Cardiac septum (tissue), 1 donor: ENCODE measurements at regions of chr19 and their contacts with region 1.

Region 1: DNA sequence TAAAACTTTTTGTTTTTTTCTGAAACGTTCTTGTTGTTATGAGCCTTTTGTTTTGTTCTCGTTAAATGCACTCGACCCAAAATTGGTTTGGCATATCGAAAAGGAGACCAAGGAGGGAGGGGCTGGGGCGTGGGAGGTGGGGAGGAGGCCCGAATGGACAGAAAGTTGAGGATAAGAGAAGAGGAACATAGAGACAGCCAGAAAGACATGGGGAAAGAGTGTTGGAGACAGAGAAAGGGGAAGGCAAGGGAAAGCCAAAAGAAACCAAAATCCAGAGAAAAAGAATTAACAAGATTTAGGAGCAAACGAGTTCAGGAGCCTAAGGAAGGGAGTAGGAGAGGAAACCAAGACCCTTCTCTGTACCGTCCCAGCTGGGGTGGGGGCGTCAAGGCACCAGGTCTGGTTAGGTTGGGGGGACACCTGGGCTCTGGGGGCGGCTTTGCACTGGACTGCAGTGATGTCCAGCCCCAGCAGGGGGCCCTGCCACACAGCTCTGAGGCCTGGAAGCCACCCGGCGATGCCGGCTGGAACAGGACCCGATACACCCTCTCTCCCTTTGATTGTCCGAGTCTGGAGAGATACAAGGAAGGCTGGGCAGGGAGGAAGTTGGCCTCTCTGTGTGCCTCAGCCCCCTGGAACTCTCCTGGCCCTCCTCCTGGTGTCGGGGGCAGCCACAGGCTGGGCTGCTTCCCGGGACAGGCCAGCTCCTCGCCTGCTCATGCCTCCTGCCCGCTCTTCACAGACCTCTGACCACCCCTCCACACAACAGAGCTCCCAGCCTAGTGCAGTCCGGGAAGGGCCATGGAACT is 11.6 kb upstream of the ASF1B start:
- DNase-seq: peak; percentile 89

Region 2: GRCh38 chr19:14198384-14199376 is 50.7 kb after region 1 on chr19:
- intact Hi-C with region 1: loop called (anchors 5 kb)
- DNase-seq: no peak

Region 3: GRCh38 chr19:14347999-14348889 is 200.2 kb after region 1 on chr19:
- intact Hi-C with region 1: loop called (anchors 5 kb)
- DNase-seq: peak; percentile 86

Region 4: GRCh38 chr19:14405758-14406644 is 258.0 kb after region 1 on chr19:
- intact Hi-C with region 1: loop called (anchors 5 kb)
- DNase-seq: peak; percentile 94

Region 5: DNA sequence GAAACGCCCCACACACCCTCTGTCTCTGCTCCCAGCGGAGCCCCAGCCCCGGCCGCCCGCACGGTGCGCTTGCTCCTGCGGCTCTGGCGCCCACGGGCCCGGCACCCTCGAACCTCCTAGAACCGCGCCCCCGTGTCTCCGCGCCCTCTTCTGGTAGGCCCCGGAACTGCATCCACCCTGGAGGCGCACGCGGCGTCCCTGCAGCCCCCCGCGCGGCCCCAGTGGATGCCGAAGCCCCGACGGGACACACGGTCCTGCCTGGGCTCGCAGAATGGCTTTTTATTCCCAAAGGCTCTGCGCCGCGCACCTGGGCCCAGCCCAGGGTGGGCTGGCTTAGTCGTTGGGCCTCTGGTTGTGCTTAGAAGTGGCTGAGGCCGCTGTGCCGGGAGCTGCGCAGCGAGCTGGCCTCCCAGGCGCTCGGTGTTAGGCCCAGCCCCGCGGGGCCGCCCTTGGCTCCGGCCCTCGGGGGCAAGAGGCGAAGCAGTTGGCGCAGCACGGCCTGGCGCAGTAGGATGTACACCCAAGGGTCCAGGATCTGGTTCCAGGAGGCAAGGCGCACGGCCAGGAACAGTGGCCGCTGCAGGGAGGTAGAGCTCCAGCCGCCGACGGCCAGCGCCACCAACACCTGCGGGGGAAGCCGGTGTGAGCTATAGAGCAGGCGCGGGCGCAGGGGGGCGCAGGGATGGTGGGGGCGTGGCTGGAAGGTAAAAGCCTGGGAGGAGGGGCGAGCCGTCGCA is 324.4 kb after region 1 on chr19:
- intact Hi-C with region 1: loop called (anchors 10 kb)
- DNase-seq: peak; percentile 88